Activated CD4-positive, alpha-beta memory T cell treated with anti-CD3 and anti-CD28 coated beads, Interleukin-2, amount 10 ng/mL, durations not matched to agents 7 days and 5 days (primary cell): ENCODE measurements at regions of chr9 and their contacts with region 1.

Region 1: GRCh38 chr9:22119537-22120158 is 110.5 kb upstream of the CDKN2B start:
- DNase-seq: peak; percentile 27
- H3K4me3 Mint-ChIP-seq: no peak overlapping the region
- H3K27ac Mint-ChIP-seq: no peak overlapping the region
- H3K4me1 Mint-ChIP-seq: peaks cover 19% of the 10 kb centered on the region
- H3K27me3 Mint-ChIP-seq: peaks cover 48% of the 10 kb centered on the region

Region 2: GRCh38 chr9:21883642-21884041 is 236.0 kb before region 1 on chr9:
- CTCF ChIA-PET with region 1: no interaction called
- POLR2A ChIA-PET with region 1: no interaction called
- DNase-seq: no peak
- H3K4me3 Mint-ChIP-seq: no peak overlapping the region
- H3K27ac Mint-ChIP-seq: no peak overlapping the region
- H3K4me1 Mint-ChIP-seq: peaks cover 8% of the 10 kb centered on the region
- H3K27me3 Mint-ChIP-seq: no peaks in the 10 kb centered on the region

Region 3: GRCh38 chr9:21995177-21996086 is 124.2 kb before region 1 on chr9:
- CTCF ChIA-PET with region 1: interaction called, 4 read pairs
- POLR2A ChIA-PET with region 1: interaction called, 11 read pairs
- DNase-seq: peak; percentile 89
- H3K4me3 Mint-ChIP-seq: peak overlapping the region; percentile 96
- H3K27ac Mint-ChIP-seq: peak overlapping the region; percentile 98
- H3K4me1 Mint-ChIP-seq: peaks cover 34% of the 10 kb centered on the region
- H3K27me3 Mint-ChIP-seq: peaks cover 14% of the 10 kb centered on the region

Region 4: GRCh38 chr9:22065431-22066200 is 54.0 kb before region 1 on chr9:
- CTCF ChIA-PET with region 1: interaction called, 11 read pairs
- POLR2A ChIA-PET with region 1: interaction called, 13 read pairs
- DNase-seq: no peak
- H3K4me3 Mint-ChIP-seq: no peak overlapping the region
- H3K27ac Mint-ChIP-seq: peak overlapping the region; percentile 75
- H3K4me1 Mint-ChIP-seq: peaks cover 46% of the 10 kb centered on the region
- H3K27me3 Mint-ChIP-seq: peaks cover 10% of the 10 kb centered on the region

Region 5: GRCh38 chr9:22105005-22105722 is 14.5 kb before region 1 on chr9:
- CTCF ChIA-PET with region 1: interaction called, 20 read pairs
- POLR2A ChIA-PET with region 1: interaction called, 3 read pairs
- DNase-seq: no peak
- H3K4me3 Mint-ChIP-seq: no peak overlapping the region
- H3K27ac Mint-ChIP-seq: peak overlapping the region; percentile 69
- H3K4me1 Mint-ChIP-seq: peaks cover 51% of the 10 kb centered on the region
- H3K27me3 Mint-ChIP-seq: peaks cover 31% of the 10 kb centered on the region